ENCODE measurements at regions of chr16 and their contacts with region 1.

Region 1: GRCh38 chr16:58336332-58337089 is 41.7 kb upstream of the PRSS54 start:
- ATAC-seq: peak; percentile 77 to 97 (median 89)
- H3K4me3 ChIP-seq: no peak overlapping the region
- H3K27ac ChIP-seq: no peak overlapping the region
- H3K4me1 ChIP-seq: peaks cover 0 to 7% of the 10 kb centered on the region in 2 donors

Region 2: DNA sequence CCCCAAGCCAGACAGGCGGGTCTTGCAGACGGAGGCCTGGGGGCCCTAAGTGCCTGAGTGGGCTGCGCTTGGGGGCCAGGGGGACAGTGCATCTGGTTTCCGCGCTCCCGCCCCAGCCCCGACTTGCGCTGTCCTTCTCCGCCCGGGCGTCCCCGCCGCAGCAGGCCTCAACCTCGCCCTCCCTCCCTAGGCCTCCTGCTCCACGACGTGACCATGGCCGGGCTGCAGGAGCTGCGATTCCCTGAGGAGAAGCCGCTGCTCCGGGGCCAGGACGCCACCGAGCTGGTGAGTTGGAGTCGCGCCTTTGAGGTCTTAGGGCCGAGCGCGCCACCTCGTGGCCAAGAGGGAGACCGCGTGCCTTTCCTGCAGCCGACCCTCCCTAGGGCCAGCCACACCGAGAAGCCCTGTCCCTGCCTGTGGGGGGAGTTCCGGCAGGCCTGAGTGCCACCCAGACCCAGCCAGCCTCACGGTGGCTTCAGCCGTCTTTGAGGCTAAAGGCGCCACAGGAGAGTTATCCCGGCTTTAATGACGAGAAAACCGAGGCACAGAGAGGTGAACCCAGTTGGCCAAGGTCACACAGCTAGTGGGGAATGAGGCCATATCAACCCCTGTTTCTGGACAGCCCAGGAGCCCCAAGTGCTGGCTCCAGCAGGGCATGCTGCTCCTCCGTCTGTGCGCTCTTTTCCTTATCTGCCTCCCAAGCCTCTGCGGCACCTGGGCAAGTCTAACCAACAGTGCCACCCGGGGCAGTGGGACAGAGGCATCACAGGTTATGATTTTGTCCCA is 151.2 kb after region 1 on chr16:
- in situ Hi-C with region 1: loop called (anchors 10 to 25 kb)
- ATAC-seq: peak; percentile 85 to 99 (median 91)
- H3K4me3 ChIP-seq: no peak overlapping the region
- H3K27ac ChIP-seq: no peak overlapping the region
- H3K4me1 ChIP-seq: peaks cover 15 to 19% of the 10 kb centered on the region in 2 donors

Region 3: GRCh38 chr16:58494981-58495520 is 158.5 kb after region 1 on chr16:
- in situ Hi-C with region 1: loop called in 5 of 9 experiments (anchors 10 to 25 kb)
- ATAC-seq: peak; percentile 57 to 85 (median 63)
- H3K4me3 ChIP-seq: peak overlapping the region; percentile 9 to 30 (median 13)
- H3K27ac ChIP-seq: peak overlapping the region; percentile 95 to 98
- H3K4me1 ChIP-seq: peaks cover 58 to 63% of the 10 kb centered on the region in 2 donors

Region 4: GRCh38 chr16:58629572-58630104 is 293.1 kb after region 1 on chr16 and contains the start of gene CNOT1:
- in situ Hi-C with region 1: loop called in 1 of 9 experiments (anchors 25 kb)
- ATAC-seq: peak; percentile 85 to 94 (median 93)
- H3K4me3 ChIP-seq: peak within 1 kb of the TSS; percentile 80 to 97 (median 83)
- H3K27ac ChIP-seq: peak within 1 kb of the TSS; percentile 89 to 96
- H3K4me1 ChIP-seq: peaks cover 4 to 7% of the 10 kb centered on the region in 2 donors
- total RNA-seq, gene CNOT1: 57.7 to 187 (median 91.9) TPM

Region 5: DNA sequence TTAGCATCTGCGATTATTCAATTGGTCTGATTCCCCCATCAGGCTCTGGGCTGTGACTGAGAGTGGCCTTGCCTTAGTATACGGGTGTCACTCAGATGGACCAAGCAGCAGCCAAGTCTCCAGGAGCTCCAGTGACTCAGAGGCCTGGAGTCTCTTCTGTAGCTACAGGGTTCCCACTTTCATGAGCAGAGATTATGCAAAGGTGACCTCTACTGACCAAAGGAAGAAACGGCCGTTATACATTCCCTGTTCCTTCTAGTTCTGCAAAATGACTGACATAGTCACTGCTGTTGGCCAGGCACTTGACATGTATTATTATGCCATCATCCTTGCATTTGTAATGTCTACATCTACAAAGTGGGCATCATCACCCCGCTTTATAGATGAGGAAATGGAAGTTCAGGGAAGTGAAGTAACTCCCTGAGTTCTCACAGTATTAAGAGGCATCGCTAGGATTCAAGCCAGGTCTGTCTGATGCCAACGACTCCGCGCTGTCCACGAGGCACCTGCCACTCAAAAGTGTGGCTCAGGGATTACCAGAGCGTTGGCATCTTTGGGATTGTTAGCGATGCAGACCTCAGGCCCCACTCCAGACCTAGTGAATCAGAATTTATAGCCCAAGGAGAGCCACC is 324.8 kb after region 1 on chr16:
- in situ Hi-C with region 1: loop called in 3 of 9 experiments (anchors 25 kb)
- ATAC-seq: peak; percentile 94 to 100 (median 99)
- H3K4me3 ChIP-seq: no peak overlapping the region
- H3K27ac ChIP-seq: no peak overlapping the region
- H3K4me1 ChIP-seq: no peaks in the 10 kb centered on the region